ENCODE measurements at regions of chr2 and their contacts with region 1.

Region 1: GRCh38 chr2:95231723-95232122 is 24.4 kb downstream of the ZNF892 start:
- DNase-seq: peak; percentile 31 to 96 (median 84)

Region 2: DNA sequence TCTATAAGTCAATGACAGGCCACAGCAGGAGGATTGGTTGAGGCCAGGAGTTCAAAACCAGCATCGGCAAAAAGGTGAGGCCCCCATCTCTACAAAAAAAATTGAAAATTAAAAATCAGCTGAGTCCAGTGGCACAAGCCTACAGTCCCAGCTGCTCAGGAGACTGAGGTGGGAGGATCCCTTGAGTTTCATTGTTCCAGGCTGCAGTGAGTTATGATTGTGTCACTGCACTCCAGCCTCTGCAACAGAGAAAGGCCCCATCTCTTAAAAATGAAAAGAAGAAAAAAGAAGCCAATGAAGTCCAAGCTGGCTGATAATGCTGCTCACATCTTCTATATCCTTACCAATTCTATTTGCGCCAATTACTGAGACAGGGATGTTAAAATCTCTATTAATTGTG is 149.2 kb before region 1 on chr2:
- intact Hi-C with region 1: no loop called
- DNase-seq: no peak

Region 3: DNA sequence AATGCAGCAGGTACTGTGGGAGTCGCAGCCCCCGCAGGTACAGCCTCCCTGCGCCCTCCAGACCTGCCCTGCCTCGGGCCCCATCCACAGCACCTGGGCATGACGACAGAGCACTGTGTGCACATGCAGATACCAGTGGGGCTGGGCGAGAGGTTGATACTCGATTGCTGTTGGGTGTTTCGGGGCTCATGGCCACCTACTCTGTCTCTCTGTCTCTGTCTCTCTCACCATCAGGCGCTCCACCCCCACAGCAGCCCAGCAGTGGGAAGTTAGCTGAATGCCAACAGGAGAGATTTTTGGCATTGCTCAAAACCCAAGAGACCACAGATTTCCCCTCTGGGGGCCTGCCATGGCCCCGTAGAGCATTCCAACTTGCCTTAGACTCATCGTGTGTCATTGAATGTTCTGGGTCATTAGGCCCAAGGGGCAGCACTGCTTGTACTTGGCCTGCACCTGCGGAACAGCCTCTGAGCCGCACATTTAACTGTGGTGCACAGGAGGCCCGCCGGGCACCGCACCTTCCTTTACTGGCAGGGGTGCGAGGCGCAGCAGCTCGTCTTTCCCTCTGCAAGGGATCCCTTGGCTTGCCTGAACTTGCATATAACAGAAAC is 84.2 kb after region 1 on chr2:
- intact Hi-C with region 1: loop called (anchors 2 kb)
- DNase-seq: peak in 3 of 42 donors; percentile 3 to 16 (median 10)

Measured in head of caudate nucleus (tissue), 42 donors.